ENCODE measurements at regions of chr17 and their contacts with region 1.

Region 1: GRCh38 chr17:35969558-35970380 is 11.5 kb downstream of the CCL16 start:
- DNase-seq: peak in 9 of 10 donors; percentile 30 to 91 (median 76)
- H3K4me3 ChIP-seq: no peak overlapping the region
- H3K27ac ChIP-seq: no peak overlapping the region
- H3K27me3 ChIP-seq: no peaks in the 10 kb centered on the region
- CTCF ChIP-seq: peak; percentile 71 to 98 (median 87)

Region 2: GRCh38 chr17:36148559-36149295 is 179.0 kb after region 1 on chr17:
- intact Hi-C with region 1: loop called in 1 of 2 experiments (anchors 10 kb)
- DNase-seq: peak in 9 of 10 donors; percentile 27 to 83 (median 57)
- H3K4me3 ChIP-seq: peak overlapping the region in 6 of 59 donors; percentile 1 to 30 (median 3)
- H3K27ac ChIP-seq: peak overlapping the region in 1 of 59 donors; percentile 1
- H3K27me3 ChIP-seq: peaks cover 0 to 56% (median 0%) of the 10 kb centered on the region in 45 donors
- CTCF ChIP-seq: peak; percentile 77 to 100 (median 92)